BJ (cell line): ENCODE measurements at regions of chr3 and their contacts with region 1.

Region 1: GRCh38 chr3:45210308-45211041 is 15.6 kb downstream of the TMEM158 start:
- DNase-seq: no peak
- H3K4me3 ChIP-seq: no peak overlapping the region
- H3K27me3 ChIP-seq: no peaks in the 10 kb centered on the region
- CTCF ChIP-seq: peak; percentile 97

Region 2: GRCh38 chr3:45043728-45044299 is 166.7 kb before region 1 on chr3:
- CTCF ChIA-PET with region 1: interaction called, 289 read pairs
- POLR2A ChIA-PET with region 1: interaction called, 11 read pairs
- DNase-seq: peak; percentile 52
- H3K4me3 ChIP-seq: no peak overlapping the region
- H3K27me3 ChIP-seq: no peaks in the 10 kb centered on the region
- CTCF ChIP-seq: peak; percentile 50

Region 3: DNA sequence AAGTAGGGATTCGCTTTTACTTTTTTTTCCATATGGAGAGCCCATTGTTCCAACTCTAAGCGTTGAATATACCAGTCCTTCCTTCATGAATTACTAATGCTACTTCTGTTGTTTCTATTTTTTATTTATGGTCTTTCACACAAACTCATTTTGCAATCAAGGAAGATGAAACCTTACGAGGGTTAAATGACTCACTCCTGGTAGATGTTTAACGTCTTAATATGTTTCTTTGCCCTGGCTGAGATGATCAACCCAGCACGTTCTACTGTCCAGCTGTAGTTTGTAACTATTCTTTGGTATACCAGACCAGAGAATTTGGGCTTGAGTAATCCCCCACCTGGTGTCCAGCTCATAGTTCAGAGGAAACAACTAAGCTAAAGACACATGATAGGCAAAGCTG is 87.4 kb before region 1 on chr3:
- CTCF ChIA-PET with region 1: interaction called, 24 read pairs
- POLR2A ChIA-PET with region 1: interaction called, 3 read pairs
- DNase-seq: peak; percentile 89
- H3K4me3 ChIP-seq: no peak overlapping the region
- H3K27me3 ChIP-seq: no peaks in the 10 kb centered on the region
- CTCF ChIP-seq: no peak

Region 4: GRCh38 chr3:45199837-45200648 is 10.4 kb before region 1 on chr3:
- CTCF ChIA-PET with region 1: interaction called, 25 read pairs
- POLR2A ChIA-PET with region 1: no interaction called
- DNase-seq: peak; percentile 64
- H3K4me3 ChIP-seq: no peak overlapping the region
- H3K27me3 ChIP-seq: no peaks in the 10 kb centered on the region
- CTCF ChIP-seq: no peak